MCF 10A (cell line): ENCODE measurements at regions of chr1 and their contacts with region 1.

Region 1: GRCh38 chr1:31182352-31182751 is 57.3 kb downstream of the NKAIN1 start:
- DNase-seq: peak; percentile 96
- H3K4me3 Mint-ChIP-seq: peak overlapping the region; percentile 40
- H3K27ac Mint-ChIP-seq: no peak overlapping the region
- H3K4me1 Mint-ChIP-seq: peaks cover 4% of the 10 kb centered on the region
- H3K27me3 Mint-ChIP-seq: peaks cover 35% of the 10 kb centered on the region
- CTCF ChIP-seq: peak; percentile 44

Region 2: GRCh38 chr1:31095298-31095981 is 86.9 kb before region 1 on chr1:
- CTCF ChIA-PET with region 1: no interaction called
- POLR2A ChIA-PET with region 1: no interaction called
- intact Hi-C with region 1: no loop called
- DNase-seq: no peak
- H3K4me3 Mint-ChIP-seq: no peak overlapping the region
- H3K27ac Mint-ChIP-seq: no peak overlapping the region
- H3K4me1 Mint-ChIP-seq: no peaks in the 10 kb centered on the region
- H3K27me3 Mint-ChIP-seq: no peaks in the 10 kb centered on the region
- CTCF ChIP-seq: no peak

Region 3: GRCh38 chr1:31166462-31166861 is 15.9 kb before region 1 on chr1:
- CTCF ChIA-PET with region 1: interaction called, 39 read pairs
- POLR2A ChIA-PET with region 1: interaction called, 5 read pairs
- intact Hi-C with region 1: loop called (anchors 1 kb)
- DNase-seq: no peak
- H3K4me3 Mint-ChIP-seq: no peak overlapping the region
- H3K27ac Mint-ChIP-seq: no peak overlapping the region
- H3K4me1 Mint-ChIP-seq: peaks cover 14% of the 10 kb centered on the region
- H3K27me3 Mint-ChIP-seq: no peaks in the 10 kb centered on the region
- CTCF ChIP-seq: no peak

Region 4: DNA sequence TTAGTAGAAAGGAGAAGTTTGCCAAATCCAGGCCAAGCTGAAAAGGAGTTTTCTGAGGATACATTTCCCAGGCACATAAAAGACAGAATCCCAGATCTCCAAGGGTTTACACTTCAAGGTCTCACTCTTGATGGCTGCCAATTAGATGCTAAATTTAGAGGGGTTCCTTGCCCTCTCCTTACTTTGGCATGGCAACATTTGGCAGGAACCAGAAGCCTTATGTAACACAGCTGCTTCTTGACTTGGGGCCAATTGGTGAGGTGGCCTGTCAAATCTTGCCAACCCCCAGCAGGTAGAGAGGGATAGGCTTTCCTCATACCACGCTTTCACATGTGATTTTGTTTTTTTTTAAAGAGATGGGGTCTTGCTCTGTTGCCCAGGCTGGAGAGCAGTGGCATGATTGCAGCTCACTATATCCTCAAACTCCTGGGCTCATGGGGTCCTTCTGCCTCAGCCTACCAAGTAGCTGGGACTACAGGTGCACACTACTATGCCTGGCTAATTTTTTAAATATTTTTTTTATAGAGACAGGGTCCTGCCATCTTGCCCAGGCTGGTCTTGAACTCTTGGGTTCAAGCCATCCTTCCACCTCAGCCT is 82.5 kb after region 1 on chr1:
- CTCF ChIA-PET with region 1: interaction called, 34 read pairs
- POLR2A ChIA-PET with region 1: no interaction called
- intact Hi-C with region 1: no loop called
- DNase-seq: peak; percentile 37
- H3K4me3 Mint-ChIP-seq: no peak overlapping the region
- H3K27ac Mint-ChIP-seq: no peak overlapping the region
- H3K4me1 Mint-ChIP-seq: no peaks in the 10 kb centered on the region
- H3K27me3 Mint-ChIP-seq: no peaks in the 10 kb centered on the region
- CTCF ChIP-seq: no peak

Region 5: GRCh38 chr1:31296486-31297276 is 114.3 kb after region 1 on chr1 and contains the starts of genes SNRNP40 and ZCCHC17:
- CTCF ChIA-PET with region 1: interaction called, 20 read pairs
- POLR2A ChIA-PET with region 1: interaction called, 10 read pairs
- intact Hi-C with region 1: no loop called
- DNase-seq: peak; percentile 99
- H3K4me3 Mint-ChIP-seq: no peak within 1 kb of the TSS
- H3K27ac Mint-ChIP-seq: no peak within 1 kb of the TSS
- H3K4me1 Mint-ChIP-seq: peaks cover 28% of the 10 kb centered on the region
- H3K27me3 Mint-ChIP-seq: no peaks in the 10 kb centered on the region
- CTCF ChIP-seq: no peak
- total RNA-seq, gene SNRNP40: 65.4 and 72.8 TPM in 2 replicates
- total RNA-seq, gene ZCCHC17: 29.3 and 40.0 TPM in 2 replicates

Region 6: GRCh38 chr1:31335007-31335406 is 152.7 kb after region 1 on chr1:
- CTCF ChIA-PET with region 1: interaction called, 78 read pairs
- POLR2A ChIA-PET with region 1: no interaction called
- intact Hi-C with region 1: loop called (anchors 1 kb)
- DNase-seq: peak; percentile 51
- H3K4me3 Mint-ChIP-seq: no peak overlapping the region
- H3K27ac Mint-ChIP-seq: no peak overlapping the region
- H3K4me1 Mint-ChIP-seq: no peaks in the 10 kb centered on the region
- H3K27me3 Mint-ChIP-seq: no peaks in the 10 kb centered on the region
- CTCF ChIP-seq: peak; percentile 57

Region 7: DNA sequence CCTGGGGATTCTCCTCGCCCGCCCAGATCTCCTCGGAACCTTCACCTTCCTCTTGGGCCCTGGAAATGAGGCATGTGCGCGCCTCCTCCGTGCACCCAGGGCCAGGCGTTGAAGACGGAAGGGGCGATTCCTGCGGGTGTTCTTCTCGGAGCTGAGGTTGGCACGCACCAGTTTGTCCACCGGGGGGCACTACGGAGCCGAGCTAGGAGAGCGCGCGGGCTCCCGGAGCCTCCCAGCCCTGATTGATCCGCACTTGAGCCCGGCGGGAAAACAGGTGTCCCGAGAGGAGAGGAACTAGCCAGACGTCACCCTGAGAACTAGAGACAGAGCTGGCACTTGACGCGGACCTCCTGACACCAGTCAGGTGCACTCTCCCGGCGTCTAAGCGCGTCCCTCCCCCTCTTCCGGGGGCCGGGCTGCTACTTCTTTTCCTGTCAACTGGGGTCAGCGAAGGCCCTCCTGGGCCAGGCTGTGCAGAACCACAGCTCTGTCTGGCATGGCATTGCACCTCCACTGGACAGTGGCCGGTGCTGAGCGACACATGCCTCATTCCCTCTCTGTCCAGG is 212.4 kb after region 1 on chr1:
- CTCF ChIA-PET with region 1: interaction called, 6 read pairs
- POLR2A ChIA-PET with region 1: interaction called, 4 read pairs
- intact Hi-C with region 1: loop called (anchors 1 kb)
- DNase-seq: peak; percentile 90
- H3K4me3 Mint-ChIP-seq: peak overlapping the region; percentile 40
- H3K27ac Mint-ChIP-seq: no peak overlapping the region
- H3K4me1 Mint-ChIP-seq: peaks cover 19% of the 10 kb centered on the region
- H3K27me3 Mint-ChIP-seq: no peaks in the 10 kb centered on the region
- CTCF ChIP-seq: peak; percentile 83

Region 8: GRCh38 chr1:31548907-31549808 is 366.8 kb after region 1 on chr1:
- CTCF ChIA-PET with region 1: interaction called, 24 read pairs
- POLR2A ChIA-PET with region 1: no interaction called
- intact Hi-C with region 1: loop called (anchors 2 kb)
- DNase-seq: peak; percentile 91
- H3K4me3 Mint-ChIP-seq: peak overlapping the region; percentile 73
- H3K27ac Mint-ChIP-seq: peak overlapping the region; percentile 33
- H3K4me1 Mint-ChIP-seq: peaks cover 11% of the 10 kb centered on the region
- H3K27me3 Mint-ChIP-seq: no peaks in the 10 kb centered on the region
- CTCF ChIP-seq: peak; percentile 71